ENCODE measurements at regions of chr12 and their contacts with region 1.

Region 1: GRCh38 chr12:88393017-88393767 is 187.1 kb downstream of the KITLG start:
- H3K4me3 Mint-ChIP-seq: no peak overlapping the region
- H3K27ac Mint-ChIP-seq: no peak overlapping the region
- H3K4me1 Mint-ChIP-seq: peaks cover 18% of the 10 kb centered on the region
- H3K27me3 Mint-ChIP-seq: peaks cover 3% of the 10 kb centered on the region

Region 2: DNA sequence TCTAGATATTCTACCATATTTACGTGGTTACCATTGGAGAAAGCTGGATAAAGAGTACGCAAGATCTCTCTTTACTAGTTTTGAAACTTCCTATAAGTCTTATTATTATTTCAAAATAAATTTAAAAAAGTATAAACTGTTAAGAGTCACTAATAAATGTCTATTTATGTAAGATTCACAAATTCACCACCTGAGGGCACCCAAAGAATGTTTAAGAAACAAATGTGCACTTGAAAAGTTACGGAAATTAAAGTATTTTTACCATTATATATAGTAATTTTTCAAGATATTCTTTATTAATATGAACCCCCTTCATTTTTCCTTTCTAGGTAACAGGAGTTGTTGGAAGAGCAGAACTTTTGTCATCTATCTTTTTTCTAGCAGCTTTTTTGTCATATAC is 239.2 kb before region 1 on chr12:
- intact Hi-C with region 1: loop called (anchors 10 kb)
- H3K4me3 Mint-ChIP-seq: no peak overlapping the region
- H3K27ac Mint-ChIP-seq: no peak overlapping the region
- H3K4me1 Mint-ChIP-seq: no peaks in the 10 kb centered on the region
- H3K27me3 Mint-ChIP-seq: no peaks in the 10 kb centered on the region

Region 3: DNA sequence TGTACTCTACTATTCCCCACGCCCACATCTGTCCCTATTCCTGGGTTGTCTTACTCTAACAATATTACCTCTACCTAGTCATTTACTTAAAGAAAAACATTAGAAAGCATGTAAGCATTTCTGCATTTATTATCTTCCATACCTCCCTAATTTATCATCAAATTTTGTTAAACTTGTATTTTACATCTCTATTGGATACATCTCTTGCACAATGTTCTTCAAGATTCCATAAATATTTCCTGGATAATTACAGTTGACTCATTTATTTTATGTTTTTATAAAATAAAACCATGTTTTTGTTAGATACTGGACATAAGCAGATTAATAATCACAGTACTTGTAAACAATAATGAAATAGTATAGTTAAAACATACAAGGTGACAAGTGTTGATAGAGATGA is 42.1 kb before region 1 on chr12:
- intact Hi-C with region 1: loop called (anchors 5 kb)
- H3K4me3 Mint-ChIP-seq: no peak overlapping the region
- H3K27ac Mint-ChIP-seq: no peak overlapping the region
- H3K4me1 Mint-ChIP-seq: peaks cover 13% of the 10 kb centered on the region
- H3K27me3 Mint-ChIP-seq: no peaks in the 10 kb centered on the region

Region 4: GRCh38 chr12:88416786-88417185 is 23.6 kb after region 1 on chr12:
- intact Hi-C with region 1: no loop called
- H3K4me3 Mint-ChIP-seq: no peak overlapping the region
- H3K27ac Mint-ChIP-seq: no peak overlapping the region
- H3K4me1 Mint-ChIP-seq: peaks cover 12% of the 10 kb centered on the region
- H3K27me3 Mint-ChIP-seq: no peaks in the 10 kb centered on the region

Region 5: DNA sequence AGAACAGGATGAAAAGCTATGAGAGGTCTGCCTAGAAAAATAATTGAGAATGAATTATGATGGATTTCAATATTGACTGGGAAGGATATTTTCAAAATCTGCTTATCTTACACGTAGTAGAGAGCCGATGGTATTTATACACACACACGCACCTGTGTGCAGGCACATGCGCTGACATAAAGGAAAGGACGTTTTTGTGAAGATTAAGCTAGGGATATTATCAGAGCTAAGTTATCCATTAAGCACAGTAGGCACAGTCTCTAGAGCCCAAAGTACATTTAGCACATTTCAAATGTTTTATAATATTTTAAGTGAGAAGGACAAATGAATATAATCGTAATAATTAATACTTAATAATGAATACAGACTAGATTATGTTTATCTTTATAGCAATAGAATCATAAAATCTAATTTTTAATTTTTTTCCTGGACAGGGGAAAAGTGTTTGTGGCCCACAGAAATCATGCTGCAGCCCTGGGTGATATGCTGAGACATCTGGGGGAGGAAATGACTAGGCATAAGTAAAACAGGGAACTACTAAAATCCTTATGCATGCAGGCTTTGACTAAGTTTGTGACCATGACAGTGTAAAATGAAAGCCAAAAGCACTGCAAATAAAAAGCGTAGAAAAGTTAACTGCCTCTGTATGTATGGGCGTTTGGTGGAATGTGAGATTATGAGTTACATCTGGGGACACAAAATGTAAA is 41.0 kb after region 1 on chr12:
- intact Hi-C with region 1: no loop called
- H3K4me3 Mint-ChIP-seq: peak overlapping the region; percentile 13
- H3K27ac Mint-ChIP-seq: peak overlapping the region; percentile 92
- H3K4me1 Mint-ChIP-seq: peaks cover 64% of the 10 kb centered on the region
- H3K27me3 Mint-ChIP-seq: no peaks in the 10 kb centered on the region

Measured in dendritic cell treated with granulocyte-macrophage colony-stimulating factor and Interleukin-4, amounts not matched to agents 40 ng/mL and 50 ng/mL, for 4 days (primary cell).